Aorta (tissue), 5 donors: ENCODE measurements at regions of chr16 and their contacts with region 1.

Region 1: GRCh38 chr16:86387461-86388440 is 122.6 kb upstream of the FOXF1 start:
- DNase-seq: no peak
- ATAC-seq: no peak
- H3K4me3 ChIP-seq: no peak overlapping the region
- H3K27ac ChIP-seq: no peak overlapping the region
- H3K4me1 ChIP-seq: no peaks in the 10 kb centered on the region
- H3K27me3 ChIP-seq: no peaks in the 10 kb centered on the region

Region 2: DNA sequence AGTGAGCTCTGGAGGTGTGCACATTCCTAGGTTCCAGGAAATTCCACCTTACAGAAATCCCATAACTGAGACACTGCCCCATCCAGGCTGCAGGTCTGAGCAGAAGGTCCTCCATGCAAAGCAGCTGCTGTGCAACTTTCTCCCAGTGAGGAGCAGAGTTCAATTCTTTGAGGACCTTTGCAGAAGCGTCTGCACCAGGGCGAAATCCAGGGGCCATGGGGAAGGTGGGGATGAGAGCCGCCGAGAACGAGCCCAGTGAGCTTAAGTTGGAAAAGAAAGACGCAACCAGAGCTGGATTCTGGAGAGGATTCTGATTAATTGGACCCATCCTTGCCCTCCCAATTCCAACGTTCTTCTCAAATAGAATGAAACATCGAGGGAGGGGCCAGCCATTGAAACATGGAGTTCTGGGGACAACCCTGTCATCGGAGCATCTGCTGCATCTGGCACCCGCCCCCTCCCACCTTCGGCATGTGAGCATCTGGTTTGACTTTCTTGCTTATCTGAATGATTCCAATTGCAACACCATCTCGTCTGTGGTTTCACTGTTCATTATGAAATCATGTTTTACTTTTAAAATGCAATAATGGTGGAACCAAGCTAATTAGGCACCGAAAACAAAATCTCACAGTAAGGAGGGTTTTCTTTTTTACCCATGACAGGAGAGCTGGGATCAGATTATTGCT is 68.0 kb before region 1 on chr16:
- intact Hi-C with region 1: loop called in 1 of 2 experiments (anchors 10 kb)
- DNase-seq: peak; percentile 30 to 35
- ATAC-seq: no peak
- H3K4me3 ChIP-seq: no peak overlapping the region
- H3K27ac ChIP-seq: no peak overlapping the region
- H3K4me1 ChIP-seq: no peaks in the 10 kb centered on the region
- H3K27me3 ChIP-seq: no peaks in the 10 kb centered on the region